ENCODE measurements at regions of chr21 and their contacts with region 1.

Region 1: DNA sequence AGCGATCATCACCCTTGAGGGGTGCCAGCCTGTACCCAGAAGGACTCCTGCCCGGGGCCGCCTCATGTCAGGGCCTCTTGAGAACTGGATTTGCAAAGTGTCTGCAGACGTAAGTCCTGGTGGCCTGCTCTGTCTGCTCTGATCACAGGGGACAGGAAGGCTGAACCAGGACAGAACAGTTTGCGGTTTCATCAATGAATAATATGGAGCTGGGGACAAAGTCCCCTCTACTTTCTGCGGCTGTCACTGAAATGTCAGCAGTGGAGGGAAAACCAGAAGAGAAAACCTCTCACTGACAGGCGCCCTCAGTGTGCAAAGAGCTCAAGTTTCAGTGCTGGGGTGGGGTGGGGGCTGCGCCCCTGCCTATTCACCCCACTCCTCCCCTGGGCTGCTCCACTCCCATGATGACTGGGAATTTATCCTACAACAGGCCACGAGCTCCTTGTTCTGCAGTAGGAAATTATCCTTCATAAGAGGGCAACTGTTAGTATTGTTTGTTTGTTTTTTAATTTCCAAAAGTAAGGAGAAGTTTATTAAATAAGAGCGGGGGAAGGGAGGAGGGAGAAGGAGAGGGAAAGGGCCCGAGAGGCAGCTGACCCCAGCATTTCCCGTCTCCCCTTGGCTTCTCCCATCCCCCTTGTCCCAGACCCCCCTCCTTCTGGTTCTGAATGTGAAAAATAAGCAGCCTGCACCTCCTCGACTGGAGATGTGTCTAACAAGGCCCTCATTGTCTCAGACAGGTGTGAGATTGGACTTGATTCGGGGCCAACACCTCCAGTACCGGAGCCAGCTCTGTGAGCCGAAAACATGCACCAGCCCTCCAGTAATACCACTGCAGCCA is 149.2 kb downstream of the CLIC6 start:
- DNase-seq: no peak
- CTCF ChIP-seq: no peak

Region 2: GRCh38 chr21:34807146-34807880 is 10.7 kb before region 1 on chr21:
- CTCF ChIA-PET with region 1: interaction called, 11 read pairs
- POLR2A ChIA-PET with region 1: no interaction called
- DNase-seq: peak; percentile 62
- CTCF ChIP-seq: no peak

Region 3: DNA sequence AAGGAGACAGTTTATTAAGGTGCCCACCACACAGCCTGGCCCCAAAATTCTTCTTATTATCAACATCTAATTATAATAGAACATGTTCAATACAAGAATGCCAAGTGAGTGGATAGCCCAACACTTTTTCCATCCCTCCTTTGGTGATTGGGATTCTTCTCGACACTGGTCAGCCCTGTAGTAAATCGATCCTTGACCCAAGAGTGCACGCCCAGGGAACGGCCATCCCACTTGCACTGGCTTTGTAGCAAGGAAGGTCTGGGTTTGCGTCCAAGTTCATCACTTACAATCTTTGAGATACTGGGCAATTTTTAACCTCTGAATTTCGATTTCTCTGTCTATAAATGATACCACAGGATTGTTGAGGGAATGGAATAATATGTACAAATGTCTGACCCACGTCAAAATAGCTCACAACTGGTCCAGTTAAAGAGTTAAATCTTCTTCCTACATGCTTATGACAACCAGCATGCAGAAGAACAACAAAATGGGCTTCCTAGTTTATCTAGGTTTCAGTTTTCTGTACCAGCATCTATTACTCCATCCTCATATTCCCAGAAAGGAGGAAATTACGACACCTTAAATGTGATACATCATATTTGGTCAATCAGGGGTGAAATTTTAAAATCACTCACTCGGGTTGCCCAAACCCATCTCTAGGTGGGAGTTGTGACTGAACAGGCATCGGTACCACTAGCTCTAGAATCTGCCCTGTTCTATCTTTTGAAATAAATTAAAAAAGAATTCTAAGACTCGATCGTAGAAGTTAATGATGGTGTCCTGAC is 12.5 kb after region 1 on chr21:
- CTCF ChIA-PET with region 1: no interaction called
- POLR2A ChIA-PET with region 1: no interaction called
- DNase-seq: no peak
- CTCF ChIP-seq: no peak

Region 4: DNA sequence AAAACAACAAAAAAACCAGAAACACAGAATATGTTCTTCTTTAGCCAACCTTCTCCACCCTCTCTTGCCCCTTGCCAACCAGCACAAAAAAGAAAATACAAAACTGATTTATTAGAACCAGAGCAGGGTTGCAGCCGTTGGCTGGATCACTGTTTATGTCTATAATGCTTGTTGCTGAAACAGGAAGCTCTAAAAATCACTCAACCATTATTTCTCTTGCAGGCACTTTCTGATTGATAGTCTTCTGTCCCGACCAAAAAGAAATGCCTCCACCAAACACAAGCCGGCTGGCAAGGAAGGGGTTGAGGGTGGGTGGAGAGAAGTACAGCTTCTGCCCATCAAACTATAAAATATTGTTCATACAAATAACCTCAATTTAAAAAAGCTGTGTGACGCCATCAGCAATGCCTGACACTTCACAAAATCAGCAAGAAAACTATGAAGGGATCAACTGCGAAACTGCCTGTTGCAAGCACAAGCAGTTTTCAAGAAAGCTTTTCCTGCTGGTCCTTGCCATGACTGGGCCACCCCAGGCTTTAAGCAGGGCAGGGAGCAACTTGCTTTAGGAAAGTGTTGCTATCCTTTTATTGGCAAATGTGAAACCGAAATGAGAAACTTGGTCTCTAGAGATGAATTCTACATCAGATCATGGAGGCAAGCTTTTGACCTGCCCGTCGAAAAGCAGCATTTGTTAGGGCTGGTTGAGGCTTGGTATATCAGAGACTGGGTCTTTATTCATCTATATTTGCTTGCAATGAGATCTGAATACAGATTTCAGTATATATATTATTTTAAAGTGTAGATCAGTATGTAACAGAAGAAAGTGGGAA is 56.9 kb after region 1 on chr21:
- CTCF ChIA-PET with region 1: no interaction called
- POLR2A ChIA-PET with region 1: no interaction called
- DNase-seq: no peak
- CTCF ChIP-seq: no peak